ENCODE measurements at regions of chr4 and their contacts with region 1.

Region 1: DNA sequence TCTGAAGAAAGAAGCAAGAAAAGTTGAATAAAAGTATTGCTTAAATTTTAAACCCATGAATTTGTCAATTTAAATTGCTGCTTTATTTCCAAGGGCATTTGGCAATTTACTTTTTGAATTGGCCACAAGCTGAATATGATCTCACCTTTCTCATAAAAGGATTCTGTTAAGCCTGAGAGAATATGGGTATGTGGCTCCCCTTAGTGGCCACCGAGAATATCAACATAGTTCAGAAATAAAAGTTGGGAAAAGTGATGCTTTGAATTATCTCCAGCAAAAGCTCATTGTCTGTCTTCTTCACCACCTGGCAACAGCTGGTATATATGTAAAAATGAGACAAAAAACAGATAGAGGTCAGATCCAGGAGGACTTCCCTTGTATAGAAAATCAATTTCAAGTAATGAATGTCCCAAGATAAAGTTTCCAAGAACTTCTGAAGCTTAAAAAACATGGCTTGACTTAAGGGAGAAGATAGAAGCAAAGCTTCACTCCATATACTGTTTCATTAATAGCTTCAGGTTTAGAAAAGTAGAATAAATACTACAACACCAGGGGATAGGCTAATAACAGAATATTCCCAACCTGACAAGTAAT is 290.7 kb upstream of the FAM241A start:
- DNase-seq: peak; percentile 39
- ATAC-seq: peak; percentile 82
- H3K4me3 ChIP-seq: no peak overlapping the region
- H3K27ac ChIP-seq: no peak overlapping the region
- H3K4me1 ChIP-seq: no peaks in the 10 kb centered on the region
- H3K27me3 ChIP-seq: no peaks in the 10 kb centered on the region
- CTCF ChIP-seq: peak; percentile 55 to 89 (median 78)
- POLR2A ChIP-seq: no peak
- RAD21 ChIP-seq: peak; percentile 84

Region 2: DNA sequence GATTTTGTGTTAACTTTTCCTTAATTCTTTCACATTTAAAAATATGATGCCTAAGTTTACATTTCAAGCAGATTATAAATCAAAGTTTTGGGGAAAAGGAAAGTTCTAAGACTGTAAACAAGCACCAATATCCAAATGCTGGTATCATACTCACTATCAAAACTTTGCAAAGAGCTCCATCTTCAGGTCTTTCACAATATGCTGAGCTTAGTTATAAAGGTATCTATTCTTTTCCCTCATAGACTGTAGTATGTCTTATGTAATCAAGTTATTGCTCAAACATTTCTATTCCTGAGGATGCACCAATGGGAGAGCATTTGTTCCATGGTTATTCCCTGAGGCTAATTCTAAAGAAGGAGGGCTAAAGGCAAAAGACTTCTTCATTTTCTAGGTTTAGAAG is 82.8 kb after region 1 on chr4:
- CTCF ChIA-PET with region 1: interaction called, 18 read pairs
- POLR2A ChIA-PET with region 1: no interaction called
- RAD21 ChIA-PET with region 1: interaction called, 3 to 5 read pairs
- intact Hi-C with region 1: loop called (anchors 5 kb)
- DNase-seq: peak; percentile 48
- ATAC-seq: peak; percentile 88
- H3K4me3 ChIP-seq: no peak overlapping the region
- H3K27ac ChIP-seq: no peak overlapping the region
- H3K4me1 ChIP-seq: 0 out of 4 replicates have a peak, but pooled peaks cover 0 to 3% of the 10 kb centered on the region in 2 experiments
- H3K27me3 ChIP-seq: no peaks in the 10 kb centered on the region
- CTCF ChIP-seq: peak; percentile 31 to 72 (median 68); a peak in 5 of 6 replicates
- POLR2A ChIP-seq: no peak
- RAD21 ChIP-seq: peak; percentile 79

Region 3: GRCh38 chr4:112060212-112060611 is 205.6 kb after region 1 on chr4:
- CTCF ChIA-PET with region 1: interaction called, 22 read pairs
- POLR2A ChIA-PET with region 1: no interaction called
- RAD21 ChIA-PET with region 1: interaction called in 1 of 2 experiments, 3 read pairs
- intact Hi-C with region 1: no loop called
- DNase-seq: peak; percentile 33
- ATAC-seq: peak; percentile 81
- H3K4me3 ChIP-seq: no peak overlapping the region
- H3K27ac ChIP-seq: no peak overlapping the region
- H3K4me1 ChIP-seq: peaks cover 0 to 7% of the 10 kb centered on the region in 2 experiments; a peak in 1 of 4 replicates
- H3K27me3 ChIP-seq: no peaks in the 10 kb centered on the region
- CTCF ChIP-seq: peak; percentile 68 to 77 (median 72)
- POLR2A ChIP-seq: no peak
- RAD21 ChIP-seq: peak; percentile 87